ENCODE measurements at regions of chr11 and their contacts with region 1.

Region 1: GRCh38 chr11:103690356-103690755 is 346.1 kb upstream of the DDI1 start:
- DNase-seq: no peak
- H3K4me3 ChIP-seq: no peak overlapping the region
- CTCF ChIP-seq: no peak
- POLR2A ChIP-seq: no peak

Region 2: GRCh38 chr11:102810945-102811660 is 879.3 kb before region 1 on chr11:
- intact Hi-C with region 1: no loop called
- DNase-seq: no peak
- H3K4me3 ChIP-seq: no peak overlapping the region
- CTCF ChIP-seq: no peak
- POLR2A ChIP-seq: no peak

Region 3: DNA sequence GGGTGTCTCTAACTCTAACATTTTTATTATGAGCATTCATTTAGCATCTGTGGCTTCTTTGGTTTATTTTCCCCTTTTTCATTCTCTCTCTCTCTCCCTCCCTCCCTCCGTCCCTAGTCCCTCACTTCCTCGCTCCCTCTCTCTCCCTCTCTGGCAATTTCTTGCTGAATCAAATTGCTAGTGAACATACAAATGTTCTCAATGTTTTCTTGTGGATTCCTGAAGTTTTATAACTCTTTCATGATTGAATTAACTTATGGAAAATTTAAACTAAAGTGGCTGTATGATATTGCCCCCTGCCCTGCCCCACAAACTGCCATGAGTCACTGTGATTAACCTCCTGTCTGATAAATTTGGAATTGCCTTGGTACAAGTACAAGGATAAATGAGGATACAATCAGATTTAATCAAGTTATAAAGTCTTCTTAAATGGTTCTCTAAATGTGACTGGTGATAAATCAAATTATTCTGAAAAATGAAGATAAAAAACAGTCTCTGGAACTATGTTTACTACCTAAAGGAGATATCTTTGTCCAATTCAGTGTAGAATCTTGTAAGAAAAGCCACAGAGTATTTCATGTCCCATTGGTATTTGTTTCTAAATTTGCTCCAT is 616.6 kb after region 1 on chr11:
- intact Hi-C with region 1: loop called (anchors 5 kb)
- DNase-seq: no peak
- H3K4me3 ChIP-seq: no peak overlapping the region
- CTCF ChIP-seq: no peak
- POLR2A ChIP-seq: no peak